Dendritic cell treated with granulocyte-macrophage colony-stimulating factor and Interleukin-4, amounts not matched to agents 40 ng/mL and 50 ng/mL, for 4 days (primary cell): ENCODE measurements at regions of chr9 and their contacts with region 1.

Region 1: GRCh38 chr9:19230356-19231125 is at the start of gene DENND4C:
- H3K4me3 Mint-ChIP-seq: no peak within 1 kb of the TSS
- H3K27ac Mint-ChIP-seq: no peak within 1 kb of the TSS
- H3K4me1 Mint-ChIP-seq: peaks cover 27% of the 10 kb centered on the region
- H3K27me3 Mint-ChIP-seq: no peaks in the 10 kb centered on the region

Region 2: GRCh38 chr9:19102631-19103345 is 127.8 kb before region 1 on chr9 and contains the start of gene HAUS6:
- intact Hi-C with region 1: loop called (anchors 2 kb)
- H3K4me3 Mint-ChIP-seq: peak within 1 kb of the TSS; percentile 90
- H3K27ac Mint-ChIP-seq: peak within 1 kb of the TSS; percentile 86
- H3K4me1 Mint-ChIP-seq: peaks cover 25% of the 10 kb centered on the region
- H3K27me3 Mint-ChIP-seq: no peaks in the 10 kb centered on the region

Region 3: DNA sequence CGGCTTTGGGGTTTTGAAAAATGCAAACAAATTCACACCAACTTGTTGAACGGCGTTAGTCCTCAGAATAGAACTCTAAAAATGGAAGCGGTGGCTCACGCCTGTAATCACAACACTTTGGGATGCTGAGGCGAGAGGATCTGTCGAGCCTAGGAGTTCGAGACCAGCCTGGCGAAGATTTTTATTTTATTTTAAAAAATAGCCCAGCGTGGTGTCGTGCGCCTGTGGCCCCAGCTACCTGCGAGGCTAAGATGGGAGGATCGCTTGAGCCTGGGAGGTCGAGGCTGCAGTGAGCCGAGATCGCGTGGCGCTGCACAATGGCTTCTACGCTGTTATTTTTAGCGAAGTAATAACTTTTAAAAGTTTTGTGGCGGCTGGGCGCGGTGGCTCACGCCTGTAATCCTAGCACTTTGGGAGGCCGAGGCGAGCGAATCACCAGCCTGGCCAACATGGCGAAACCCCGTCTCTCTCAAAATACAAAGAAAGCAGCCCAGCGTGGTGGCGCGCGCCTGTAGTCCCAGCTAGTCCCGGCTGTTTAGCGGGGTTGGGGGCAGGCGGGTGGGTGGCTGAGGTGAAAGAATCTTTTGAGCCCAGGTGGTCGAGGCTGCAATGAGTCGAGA is 102.5 kb before region 1 on chr9:
- intact Hi-C with region 1: loop called (anchors 2 kb)
- H3K4me3 Mint-ChIP-seq: peak overlapping the region; percentile 84
- H3K27ac Mint-ChIP-seq: peak overlapping the region; percentile 96
- H3K4me1 Mint-ChIP-seq: peaks cover 52% of the 10 kb centered on the region
- H3K27me3 Mint-ChIP-seq: no peaks in the 10 kb centered on the region

Region 4: GRCh38 chr9:19184144-19184917 is 46.2 kb before region 1 on chr9:
- intact Hi-C with region 1: loop called (anchors 1 kb)
- H3K4me3 Mint-ChIP-seq: peak overlapping the region; percentile 11
- H3K27ac Mint-ChIP-seq: peak overlapping the region; percentile 94
- H3K4me1 Mint-ChIP-seq: peaks cover 34% of the 10 kb centered on the region
- H3K27me3 Mint-ChIP-seq: no peaks in the 10 kb centered on the region

Region 5: DNA sequence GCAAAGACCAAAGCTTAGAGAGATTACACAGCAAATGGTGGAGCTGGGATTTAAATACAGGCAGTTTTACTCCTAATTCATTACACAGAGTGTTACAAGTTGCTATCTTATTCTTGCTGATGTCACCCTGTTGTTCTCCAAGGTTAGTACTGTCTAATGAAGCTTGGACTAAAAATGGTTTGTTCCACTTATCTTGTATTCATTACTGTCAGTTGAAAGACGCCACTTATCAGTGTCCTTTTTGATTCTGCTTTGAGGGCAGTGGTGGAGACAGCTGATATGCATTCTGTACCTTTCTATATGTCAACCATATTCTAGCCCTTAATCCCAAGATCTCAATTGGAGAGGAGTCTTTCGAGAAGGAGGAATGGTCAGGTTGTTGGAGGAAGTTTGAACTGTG is 14.1 kb before region 1 on chr9:
- intact Hi-C with region 1: no loop called
- H3K4me3 Mint-ChIP-seq: no peak overlapping the region
- H3K27ac Mint-ChIP-seq: no peak overlapping the region
- H3K4me1 Mint-ChIP-seq: peaks cover 5% of the 10 kb centered on the region
- H3K27me3 Mint-ChIP-seq: no peaks in the 10 kb centered on the region

Region 6: DNA sequence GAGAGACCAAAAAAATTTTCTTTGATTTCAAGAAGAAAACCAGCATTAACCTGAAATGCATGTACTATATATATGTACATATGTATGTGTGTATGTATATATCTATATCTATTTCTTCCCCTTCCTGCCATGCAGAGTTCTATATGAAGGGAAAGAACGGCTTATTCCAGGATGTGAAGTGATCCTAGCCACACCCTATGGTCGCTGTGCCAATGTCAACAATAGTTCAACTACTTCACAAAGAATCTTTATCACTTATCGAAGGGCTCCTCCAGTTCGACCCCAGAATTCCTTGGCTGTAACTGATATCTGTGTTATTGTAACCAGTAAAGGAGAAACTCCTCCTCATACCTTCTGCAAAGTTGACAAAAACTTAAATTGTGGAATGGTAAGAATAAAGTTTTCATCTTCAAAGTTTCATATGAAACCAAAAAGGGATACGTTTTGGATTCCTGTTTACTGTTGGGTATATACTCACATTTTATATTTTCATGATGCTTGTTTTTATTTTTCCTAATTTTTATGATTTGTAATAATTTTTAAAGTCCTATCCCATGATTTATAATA is 56.2 kb after region 1 on chr9:
- intact Hi-C with region 1: loop called (anchors 10 kb)
- H3K4me3 Mint-ChIP-seq: no peak overlapping the region
- H3K27ac Mint-ChIP-seq: no peak overlapping the region
- H3K4me1 Mint-ChIP-seq: peaks cover 12% of the 10 kb centered on the region
- H3K27me3 Mint-ChIP-seq: no peaks in the 10 kb centered on the region